CD8-positive, alpha-beta T cell (primary cell): ENCODE measurements at regions of chr3 and their contacts with region 1.

Region 1: DNA sequence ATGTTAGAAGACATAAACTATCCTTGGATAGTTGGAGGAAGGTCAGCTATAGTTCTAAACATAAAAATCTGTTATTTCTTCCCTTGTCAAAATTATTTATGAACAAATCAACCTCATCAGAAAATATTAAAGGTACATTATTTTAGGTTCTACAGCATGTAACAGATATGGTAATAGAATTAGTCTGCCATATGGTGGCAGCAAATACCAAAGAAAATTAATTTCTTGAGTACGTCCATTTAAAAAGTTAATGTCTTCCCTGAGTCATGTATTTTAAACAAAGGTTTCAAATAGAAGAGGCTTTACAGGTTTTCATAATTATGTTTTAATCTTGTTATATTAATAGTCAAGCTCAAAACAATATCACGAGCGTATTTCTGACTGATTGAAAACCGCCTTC is 17.9 kb upstream of the ANKRD28 start:
- DNase-seq: peak in 2 of 9 experiments; percentile 53 to 65
- ATAC-seq: no peak
- H3K4me3 ChIP-seq: no peak overlapping the region
- H3K4me3 Mint-ChIP-seq: no peak overlapping the region
- H3K27ac ChIP-seq: no peak overlapping the region
- H3K27ac Mint-ChIP-seq: no peak overlapping the region
- H3K4me1 ChIP-seq: peaks cover 10% of the 10 kb centered on the region
- H3K4me1 Mint-ChIP-seq: peaks cover 40% of the 10 kb centered on the region
- H3K27me3 ChIP-seq: no peaks in the 10 kb centered on the region
- H3K27me3 Mint-ChIP-seq: no peaks in the 10 kb centered on the region
- CTCF ChIP-seq: peak; percentile 46

Region 2: DNA sequence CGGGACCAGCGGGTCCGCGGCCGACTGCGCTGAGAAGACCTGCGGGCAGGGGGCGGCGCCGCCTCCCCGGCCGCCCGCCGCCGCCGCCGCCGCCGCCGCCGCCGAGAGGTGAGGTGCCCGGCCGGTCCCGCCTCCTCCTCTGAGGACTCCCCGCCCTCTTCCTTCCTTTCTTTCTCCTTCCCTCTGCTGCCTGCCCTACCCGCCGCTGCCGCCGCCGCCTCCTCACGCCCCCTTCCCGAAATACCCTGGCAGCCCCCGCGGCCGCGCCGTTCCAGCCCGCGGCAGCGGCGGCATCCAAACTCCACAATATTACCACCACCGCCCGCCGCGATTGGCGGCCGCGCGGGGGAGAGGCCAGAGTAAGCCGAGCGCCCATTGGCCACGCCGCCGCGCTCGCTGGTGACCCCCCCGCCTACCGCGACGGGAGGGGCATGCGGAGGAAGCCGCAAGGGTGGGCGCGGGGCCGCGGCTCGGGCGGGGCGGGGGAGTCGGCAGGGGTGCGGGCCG is 43.9 kb after region 1 on chr3:
- CTCF ChIA-PET with region 1: no interaction called
- POLR2A ChIA-PET with region 1: no interaction called
- intact Hi-C with region 1: loop called in 1 of 2 experiments (anchors 2 kb)
- DNase-seq: peak; percentile 42 to 88 (median 73)
- ATAC-seq: peak; percentile 78
- H3K4me3 ChIP-seq: peak overlapping the region; percentile 73 to 86
- H3K4me3 Mint-ChIP-seq: peak overlapping the region; percentile 97
- H3K27ac ChIP-seq: peak overlapping the region in 1 of 2 experiments; percentile 46
- H3K27ac Mint-ChIP-seq: peak overlapping the region; percentile 95
- H3K4me1 ChIP-seq: peaks cover 20% of the 10 kb centered on the region
- H3K4me1 Mint-ChIP-seq: peaks cover 35% of the 10 kb centered on the region
- H3K27me3 ChIP-seq: no peaks in the 10 kb centered on the region
- H3K27me3 Mint-ChIP-seq: no peaks in the 10 kb centered on the region
- CTCF ChIP-seq: no peak

Region 3: DNA sequence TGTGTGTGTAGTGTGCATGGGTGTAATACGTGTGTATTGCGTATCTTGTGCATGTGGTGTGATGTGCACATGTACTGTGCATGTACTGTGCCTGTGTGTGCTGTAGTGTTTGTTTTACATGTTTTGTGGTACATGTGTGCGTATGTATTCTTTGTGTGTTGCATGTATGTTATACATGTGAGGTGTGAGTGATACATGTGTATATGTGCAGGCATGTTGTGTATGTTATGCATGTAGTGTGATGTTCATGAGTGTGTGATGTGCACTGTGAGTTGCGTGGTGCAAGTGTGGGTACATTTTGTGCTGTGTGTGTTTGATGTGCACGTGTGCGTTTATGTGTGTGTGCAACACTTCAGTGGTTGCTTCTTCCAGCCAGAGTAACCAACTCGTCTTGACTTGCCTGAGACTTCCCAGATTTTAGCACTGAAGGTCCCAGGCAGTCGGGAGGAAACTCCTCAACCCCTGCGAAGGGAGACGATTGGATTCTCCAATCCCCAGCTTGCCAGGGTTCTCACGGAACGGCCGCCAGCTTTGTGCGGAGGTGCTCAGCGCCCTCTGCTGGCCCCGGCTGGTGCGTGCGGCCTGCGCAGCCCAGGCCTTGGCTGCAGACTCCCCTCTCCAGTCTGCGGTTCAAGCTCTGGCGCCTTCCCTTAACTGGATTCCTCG is 362.4 kb after region 1 on chr3:
- CTCF ChIA-PET with region 1: interaction called, 3 read pairs
- POLR2A ChIA-PET with region 1: no interaction called
- intact Hi-C with region 1: loop called in 1 of 2 experiments (anchors 1 kb)
- DNase-seq: peak; percentile 12 to 67 (median 53)
- ATAC-seq: peak; percentile 62
- H3K4me3 ChIP-seq: no peak overlapping the region
- H3K4me3 Mint-ChIP-seq: no peak overlapping the region
- H3K27ac ChIP-seq: no peak overlapping the region
- H3K27ac Mint-ChIP-seq: no peak overlapping the region
- H3K4me1 ChIP-seq: no peaks in the 10 kb centered on the region
- H3K4me1 Mint-ChIP-seq: peaks cover 3% of the 10 kb centered on the region
- H3K27me3 ChIP-seq: no peaks in the 10 kb centered on the region
- H3K27me3 Mint-ChIP-seq: peaks cover 18% of the 10 kb centered on the region
- CTCF ChIP-seq: peak; percentile 73

Region 4: GRCh38 chr3:16247276-16248061 is 431.8 kb after region 1 on chr3:
- CTCF ChIA-PET with region 1: interaction called, 3 read pairs
- POLR2A ChIA-PET with region 1: no interaction called
- intact Hi-C with region 1: loop called (anchors 1 kb)
- DNase-seq: peak; percentile 54 to 86 (median 76)
- ATAC-seq: peak; percentile 90
- H3K4me3 ChIP-seq: no peak overlapping the region
- H3K4me3 Mint-ChIP-seq: no peak overlapping the region
- H3K27ac ChIP-seq: no peak overlapping the region
- H3K27ac Mint-ChIP-seq: no peak overlapping the region
- H3K4me1 ChIP-seq: no peaks in the 10 kb centered on the region
- H3K4me1 Mint-ChIP-seq: peaks cover 7% of the 10 kb centered on the region
- H3K27me3 ChIP-seq: no peaks in the 10 kb centered on the region
- H3K27me3 Mint-ChIP-seq: peaks cover 4% of the 10 kb centered on the region
- CTCF ChIP-seq: peak; percentile 79

Region 5: GRCh38 chr3:16550676-16551341 is 735.1 kb after region 1 on chr3:
- CTCF ChIA-PET with region 1: no interaction called
- POLR2A ChIA-PET with region 1: no interaction called
- intact Hi-C with region 1: loop called in 1 of 2 experiments (anchors 5 kb)
- DNase-seq: peak; percentile 51 to 89 (median 73)
- ATAC-seq: peak; percentile 100
- H3K4me3 ChIP-seq: no peak overlapping the region
- H3K4me3 Mint-ChIP-seq: no peak overlapping the region
- H3K27ac ChIP-seq: no peak overlapping the region
- H3K27ac Mint-ChIP-seq: peak overlapping the region; percentile 60
- H3K4me1 ChIP-seq: no peaks in the 10 kb centered on the region
- H3K4me1 Mint-ChIP-seq: peaks cover 3% of the 10 kb centered on the region
- H3K27me3 ChIP-seq: no peaks in the 10 kb centered on the region
- H3K27me3 Mint-ChIP-seq: no peaks in the 10 kb centered on the region
- CTCF ChIP-seq: peak; percentile 87